Left ventricle myocardium inferior (tissue), 1 donor: ENCODE measurements at regions of chr16 and their contacts with region 1.

Region 1: GRCh38 chr16:8885674-8886592 is 3.8 kb downstream of the LITAFD start:
- DNase-seq: no peak
- H3K4me3 ChIP-seq: no peak overlapping the region
- H3K27ac ChIP-seq: no peak overlapping the region
- H3K4me1 ChIP-seq: peaks cover 33% of the 10 kb centered on the region
- H3K27me3 ChIP-seq: peaks cover 23% of the 10 kb centered on the region
- CTCF ChIP-seq: no peak

Region 2: GRCh38 chr16:8572919-8573724 is 312.8 kb before region 1 on chr16:
- intact Hi-C with region 1: loop called (anchors 5 kb)
- DNase-seq: no peak
- H3K4me3 ChIP-seq: no peak overlapping the region
- H3K27ac ChIP-seq: no peak overlapping the region
- H3K4me1 ChIP-seq: peaks cover 13% of the 10 kb centered on the region
- H3K27me3 ChIP-seq: peaks cover 90% of the 10 kb centered on the region
- CTCF ChIP-seq: peak; percentile 47

Region 3: DNA sequence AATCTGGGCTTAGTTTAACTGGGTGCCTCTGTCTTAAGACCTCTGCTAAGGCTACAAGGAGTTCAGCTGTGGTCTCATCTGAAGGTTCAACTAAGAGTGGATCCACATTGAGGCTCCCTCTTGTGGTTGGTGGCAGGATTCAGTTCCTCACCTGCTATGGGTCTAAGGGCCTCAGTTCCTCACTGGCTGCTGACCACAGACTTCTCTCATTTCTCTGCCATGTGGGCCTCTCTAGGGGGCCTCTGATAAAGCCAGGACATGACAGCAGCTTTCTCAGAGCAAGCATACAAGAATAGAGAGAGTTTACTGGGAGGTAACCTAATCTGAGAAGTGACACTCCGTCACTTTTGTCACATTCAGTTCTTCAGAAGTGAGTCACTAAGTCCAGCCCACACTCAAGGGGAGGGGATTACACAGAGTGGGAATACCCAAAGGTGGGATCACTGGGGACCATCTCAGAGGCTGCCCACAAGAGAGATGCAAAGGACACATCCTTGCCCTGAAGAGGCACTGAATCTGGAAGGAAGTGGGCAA is 230.7 kb before region 1 on chr16:
- intact Hi-C with region 1: loop called (anchors 10 kb)
- DNase-seq: no peak
- H3K4me3 ChIP-seq: no peak overlapping the region
- H3K27ac ChIP-seq: no peak overlapping the region
- H3K4me1 ChIP-seq: no peaks in the 10 kb centered on the region
- H3K27me3 ChIP-seq: no peaks in the 10 kb centered on the region
- CTCF ChIP-seq: peak; percentile 55